ENCODE measurements at regions of chr2 and their contacts with region 1.

Region 1: GRCh38 chr2:195656859-195657633 is at the start of gene SLC39A10:
- DNase-seq: peak; percentile 93
- ATAC-seq: peak; percentile 78
- H3K4me3 ChIP-seq: peak within 1 kb of the TSS; percentile 98
- H3K27ac ChIP-seq: peak within 1 kb of the TSS; percentile 96
- H3K4me1 ChIP-seq: no peaks in the 10 kb centered on the region
- H3K27me3 ChIP-seq: no peaks in the 10 kb centered on the region
- CTCF ChIP-seq: peak in 1 of 3 experiments; percentile 25; a peak in 1 of 6 replicates
- EP300 ChIP-seq: 0 out of 4 replicates have a peak, but pooled peaks of 1 of the 2 experiments have one; percentile 18
- POLR2A ChIP-seq: peak; percentile 98
- RAD21 ChIP-seq: no peak
- polyA plus RNA-seq, gene SLC39A10: 2.0 to 4.9 TPM

Region 2: DNA sequence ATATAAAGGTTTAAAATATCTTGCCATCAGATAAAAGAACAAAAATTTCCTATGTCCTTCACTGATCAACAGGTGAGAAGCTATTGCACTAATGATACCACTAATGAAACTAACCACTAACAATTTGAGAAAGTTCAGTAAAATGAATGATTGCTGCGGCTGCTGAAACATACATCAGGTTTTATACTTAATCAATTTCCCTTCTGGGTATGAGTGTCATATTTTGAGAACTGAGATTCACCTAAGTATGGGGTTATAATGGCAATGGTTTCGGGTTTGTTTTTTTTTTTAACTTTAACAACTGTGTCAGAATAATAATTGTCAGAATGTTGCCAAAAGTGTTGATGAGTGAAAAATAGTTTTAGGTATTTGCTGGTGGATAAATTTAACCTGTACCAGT is 151.3 kb before region 1 on chr2:
- CTCF ChIA-PET with region 1: interaction called, 12 read pairs
- POLR2A ChIA-PET with region 1: no interaction called
- RAD21 ChIA-PET with region 1: interaction called, 124 read pairs
- SMC1A ChIA-PET with region 1: interaction called, 83 read pairs
- in situ Hi-C with region 1: no loop called
- intact Hi-C with region 1: no loop called
- DNase-seq: peak; percentile 83
- ATAC-seq: peak; percentile 95
- H3K4me3 ChIP-seq: no peak overlapping the region
- H3K27ac ChIP-seq: no peak overlapping the region
- H3K4me1 ChIP-seq: peaks cover 3% of the 10 kb centered on the region; the same call in 1 of the 2 replicates
- H3K27me3 ChIP-seq: no peaks in the 10 kb centered on the region
- CTCF ChIP-seq: no peak
- EP300 ChIP-seq: peak; percentile 95 to 97
- POLR2A ChIP-seq: no peak
- RAD21 ChIP-seq: no peak

Region 3: GRCh38 chr2:195559431-195559914 is 97.6 kb before region 1 on chr2:
- CTCF ChIA-PET with region 1: interaction called, 38 read pairs
- POLR2A ChIA-PET with region 1: interaction called, 26 read pairs
- RAD21 ChIA-PET with region 1: interaction called, 95 read pairs
- SMC1A ChIA-PET with region 1: interaction called, 53 read pairs
- in situ Hi-C with region 1: loop called (anchors 5 kb)
- intact Hi-C with region 1: loop called (anchors 1 kb)
- DNase-seq: peak; percentile 99
- ATAC-seq: peak; percentile 72
- H3K4me3 ChIP-seq: 0 out of 2 replicates have a peak overlapping the region, but pooled peaks have one; percentile 6
- H3K27ac ChIP-seq: peak overlapping the region; percentile 94
- H3K4me1 ChIP-seq: peaks cover 39% of the 10 kb centered on the region
- H3K27me3 ChIP-seq: no peaks in the 10 kb centered on the region
- CTCF ChIP-seq: no peak
- EP300 ChIP-seq: peak; percentile 88 to 97
- POLR2A ChIP-seq: no peak
- RAD21 ChIP-seq: 0 out of 2 replicates have a peak, but pooled peaks have one; percentile 15

Region 4: DNA sequence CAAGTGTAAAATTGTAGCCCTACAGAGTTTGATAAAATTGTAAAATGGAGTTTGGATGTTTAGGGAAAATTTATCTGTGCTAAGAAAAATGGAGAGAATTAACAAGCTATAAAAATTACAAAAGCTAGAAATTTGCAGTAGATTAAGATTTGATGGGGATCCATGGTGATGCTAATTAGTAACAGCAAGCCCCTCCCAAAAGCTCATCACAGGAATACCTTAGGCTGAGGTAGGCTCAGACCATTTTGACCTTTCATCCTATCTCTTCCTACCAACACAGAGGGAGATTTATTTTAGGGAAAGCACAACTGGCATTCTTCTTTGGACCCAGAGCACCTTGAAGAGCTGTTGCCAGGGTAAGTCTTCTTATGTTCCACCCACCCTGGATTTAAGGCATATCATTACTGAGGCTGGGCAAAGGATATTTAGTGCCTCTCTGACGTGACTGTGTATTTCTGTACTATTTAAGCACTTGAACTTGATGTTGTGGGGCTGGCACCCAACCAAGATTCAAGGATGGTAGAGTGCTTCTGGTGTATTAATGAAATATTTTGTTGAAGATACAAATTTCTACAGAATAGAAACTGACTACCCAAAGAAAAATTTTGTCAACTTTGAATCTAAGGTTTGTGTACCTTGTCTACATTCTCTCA is 70.9 kb before region 1 on chr2:
- CTCF ChIA-PET with region 1: interaction called, 3 read pairs
- POLR2A ChIA-PET with region 1: no interaction called
- RAD21 ChIA-PET with region 1: interaction called, 15 read pairs
- SMC1A ChIA-PET with region 1: interaction called, 244 read pairs
- in situ Hi-C with region 1: no loop called
- intact Hi-C with region 1: no loop called
- DNase-seq: no peak
- ATAC-seq: no peak
- H3K4me3 ChIP-seq: no peak overlapping the region
- H3K27ac ChIP-seq: no peak overlapping the region
- H3K4me1 ChIP-seq: no peaks in the 10 kb centered on the region
- H3K27me3 ChIP-seq: no peaks in the 10 kb centered on the region
- CTCF ChIP-seq: no peak
- EP300 ChIP-seq: no peak
- POLR2A ChIP-seq: no peak
- RAD21 ChIP-seq: no peak

Region 5: DNA sequence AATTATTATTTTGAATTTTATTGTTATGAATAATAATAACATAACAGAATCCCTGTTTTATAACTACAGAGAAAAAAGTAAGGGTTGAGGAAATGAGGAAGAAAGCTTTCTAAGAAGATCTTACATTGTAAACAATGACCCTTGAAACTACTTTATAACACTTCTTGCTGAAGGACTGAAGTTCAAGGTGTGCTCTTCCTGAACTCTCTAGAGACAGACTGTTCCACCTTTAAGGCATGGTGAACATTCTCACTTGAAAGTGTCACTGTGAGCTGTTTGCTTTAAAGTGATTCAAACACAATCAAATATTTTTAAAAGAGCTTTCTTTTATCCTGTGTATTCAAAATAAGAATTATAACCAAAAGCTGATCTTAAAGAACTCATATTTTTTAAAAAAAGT is 280.1 kb after region 1 on chr2:
- CTCF ChIA-PET with region 1: no interaction called
- POLR2A ChIA-PET with region 1: no interaction called
- RAD21 ChIA-PET with region 1: no interaction called
- SMC1A ChIA-PET with region 1: interaction called, 3 read pairs
- in situ Hi-C with region 1: no loop called
- intact Hi-C with region 1: loop called (anchors 5 kb)
- DNase-seq: no peak
- ATAC-seq: no peak
- H3K4me3 ChIP-seq: no peak overlapping the region
- H3K27ac ChIP-seq: no peak overlapping the region
- H3K4me1 ChIP-seq: no peaks in the 10 kb centered on the region
- H3K27me3 ChIP-seq: no peaks in the 10 kb centered on the region
- CTCF ChIP-seq: no peak
- EP300 ChIP-seq: no peak
- POLR2A ChIP-seq: no peak
- RAD21 ChIP-seq: no peak

Region 6: DNA sequence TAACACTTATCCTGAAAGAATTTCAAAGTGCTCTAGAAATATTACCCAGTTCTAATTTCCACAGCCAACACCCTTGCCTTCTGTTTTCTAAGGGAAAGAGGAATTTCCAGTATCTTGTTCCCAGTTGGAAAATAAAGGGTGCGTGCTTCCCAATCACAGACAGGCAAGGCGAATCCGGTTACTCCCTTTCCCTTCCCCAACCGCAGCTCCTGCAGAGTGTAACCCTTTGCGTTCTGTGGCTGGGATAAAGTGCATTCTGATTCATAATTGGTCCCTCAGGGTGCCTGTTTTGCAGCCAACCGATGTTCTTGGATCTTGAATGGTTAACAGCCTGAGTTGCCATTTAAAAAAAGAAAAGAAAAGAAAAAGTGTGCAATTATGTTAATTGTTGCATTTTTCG is 1310.1 kb after region 1 on chr2:
- CTCF ChIA-PET with region 1: no interaction called
- POLR2A ChIA-PET with region 1: no interaction called
- RAD21 ChIA-PET with region 1: no interaction called
- SMC1A ChIA-PET with region 1: no interaction called
- in situ Hi-C with region 1: no loop called
- intact Hi-C with region 1: no loop called
- DNase-seq: no peak
- ATAC-seq: no peak
- H3K4me3 ChIP-seq: no peak overlapping the region
- H3K27ac ChIP-seq: no peak overlapping the region
- H3K4me1 ChIP-seq: no peaks in the 10 kb centered on the region
- H3K27me3 ChIP-seq: no peaks in the 10 kb centered on the region
- CTCF ChIP-seq: no peak
- EP300 ChIP-seq: no peak
- POLR2A ChIP-seq: no peak
- RAD21 ChIP-seq: no peak

Measured in GM12878 (cell line).